B cell (primary cell): ENCODE measurements at regions of chr4 and their contacts with region 1.

Region 1: DNA sequence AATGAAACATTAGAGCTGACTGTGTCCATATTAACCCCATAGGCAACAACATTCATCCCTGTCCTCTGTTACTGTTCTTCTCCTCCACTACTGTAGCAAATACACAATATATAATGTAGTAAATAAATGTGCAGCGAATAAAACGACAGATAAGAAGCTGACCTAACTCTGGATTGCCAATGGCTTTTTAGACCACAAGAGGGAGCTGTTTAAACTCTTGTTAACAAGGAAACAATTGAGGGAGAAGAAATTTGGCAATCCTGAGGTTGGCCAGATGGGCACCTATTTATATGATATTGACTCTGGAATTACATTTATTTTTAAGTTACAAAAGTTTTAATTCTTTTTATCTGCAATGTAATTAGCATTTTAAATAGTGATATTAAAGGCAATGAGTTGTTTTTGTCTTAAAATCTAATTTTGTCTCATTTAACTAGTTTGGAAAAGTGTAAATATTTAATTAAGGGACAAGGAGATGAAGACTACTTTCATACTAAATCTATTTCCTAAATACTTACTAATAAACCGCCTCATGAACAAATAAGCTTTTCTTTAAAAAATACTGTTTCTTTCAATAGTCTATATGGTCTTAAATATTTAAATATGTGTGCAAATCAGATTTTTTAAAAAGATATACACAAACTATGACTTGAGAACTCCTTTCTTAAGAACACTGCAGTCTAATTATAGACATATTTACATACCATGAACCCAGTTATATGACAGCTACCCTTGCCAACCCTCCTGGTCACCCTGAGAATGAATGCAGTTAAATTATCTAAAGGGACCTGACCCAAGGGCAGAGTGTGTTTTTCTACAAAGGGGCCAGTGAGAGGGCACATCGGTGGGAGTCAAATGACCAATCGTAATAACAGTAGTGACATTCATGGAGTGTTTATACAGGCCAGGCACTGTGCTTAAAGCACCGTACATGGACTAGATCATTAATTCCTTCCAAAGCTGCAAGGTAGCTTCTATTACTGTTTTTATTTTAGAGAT is 52.9 kb upstream of the HPF1 start:
- DNase-seq: peak; percentile 67
- ATAC-seq: peak; percentile 36
- H3K4me3 ChIP-seq: no peak overlapping the region
- H3K4me3 Mint-ChIP-seq: no peak overlapping the region
- H3K27ac ChIP-seq: no peak overlapping the region
- H3K27ac Mint-ChIP-seq: no peak overlapping the region
- H3K4me1 ChIP-seq: no peaks in the 10 kb centered on the region
- H3K4me1 Mint-ChIP-seq: no peaks in the 10 kb centered on the region
- H3K27me3 ChIP-seq: no peaks in the 10 kb centered on the region
- H3K27me3 Mint-ChIP-seq: peaks cover 3% of the 10 kb centered on the region
- CTCF ChIP-seq: peak; percentile 89

Region 2: GRCh38 chr4:169823685-169824084 is 13.1 kb after region 1 on chr4:
- CTCF ChIA-PET with region 1: interaction called, 11 read pairs
- POLR2A ChIA-PET with region 1: no interaction called
- intact Hi-C with region 1: no loop called
- DNase-seq: no peak
- ATAC-seq: no peak
- H3K4me3 ChIP-seq: no peak overlapping the region
- H3K4me3 Mint-ChIP-seq: no peak overlapping the region
- H3K27ac ChIP-seq: no peak overlapping the region
- H3K27ac Mint-ChIP-seq: no peak overlapping the region
- H3K4me1 ChIP-seq: peaks cover 3% of the 10 kb centered on the region in 2 donors
- H3K4me1 Mint-ChIP-seq: peaks cover 3% of the 10 kb centered on the region
- H3K27me3 ChIP-seq: peaks cover 0 to 6% (median 0%) of the 10 kb centered on the region in 4 experiments
- H3K27me3 Mint-ChIP-seq: peaks cover 7% of the 10 kb centered on the region
- CTCF ChIP-seq: no peak

Region 3: GRCh38 chr4:169846396-169846795 is 35.8 kb after region 1 on chr4:
- CTCF ChIA-PET with region 1: no interaction called
- POLR2A ChIA-PET with region 1: no interaction called
- intact Hi-C with region 1: no loop called
- DNase-seq: no peak
- ATAC-seq: no peak
- H3K4me3 ChIP-seq: no peak overlapping the region
- H3K4me3 Mint-ChIP-seq: no peak overlapping the region
- H3K27ac ChIP-seq: no peak overlapping the region
- H3K27ac Mint-ChIP-seq: no peak overlapping the region
- H3K4me1 ChIP-seq: no peaks in the 10 kb centered on the region
- H3K4me1 Mint-ChIP-seq: no peaks in the 10 kb centered on the region
- H3K27me3 ChIP-seq: peaks cover 0 to 3% (median 0%) of the 10 kb centered on the region in 4 experiments
- H3K27me3 Mint-ChIP-seq: peaks cover 26% of the 10 kb centered on the region
- CTCF ChIP-seq: no peak

Region 4: GRCh38 chr4:170040031-170040680 is 229.5 kb after region 1 on chr4:
- CTCF ChIA-PET with region 1: interaction called, 20 read pairs
- POLR2A ChIA-PET with region 1: no interaction called
- intact Hi-C with region 1: no loop called
- DNase-seq: no peak
- ATAC-seq: no peak
- H3K4me3 ChIP-seq: no peak overlapping the region
- H3K4me3 Mint-ChIP-seq: no peak overlapping the region
- H3K27ac ChIP-seq: no peak overlapping the region
- H3K27ac Mint-ChIP-seq: no peak overlapping the region
- H3K4me1 ChIP-seq: no peaks in the 10 kb centered on the region
- H3K4me1 Mint-ChIP-seq: no peaks in the 10 kb centered on the region
- H3K27me3 ChIP-seq: no peaks in the 10 kb centered on the region
- H3K27me3 Mint-ChIP-seq: peaks cover 8% of the 10 kb centered on the region
- CTCF ChIP-seq: no peak

Region 5: GRCh38 chr4:170047771-170048354 is 237.2 kb after region 1 on chr4:
- CTCF ChIA-PET with region 1: interaction called, 51 read pairs
- POLR2A ChIA-PET with region 1: no interaction called
- intact Hi-C with region 1: no loop called
- DNase-seq: peak; percentile 69
- ATAC-seq: no peak
- H3K4me3 ChIP-seq: no peak overlapping the region
- H3K4me3 Mint-ChIP-seq: no peak overlapping the region
- H3K27ac ChIP-seq: no peak overlapping the region
- H3K27ac Mint-ChIP-seq: no peak overlapping the region
- H3K4me1 ChIP-seq: no peaks in the 10 kb centered on the region
- H3K4me1 Mint-ChIP-seq: no peaks in the 10 kb centered on the region
- H3K27me3 ChIP-seq: peaks cover 0 to 3% (median 1%) of the 10 kb centered on the region in 4 experiments
- H3K27me3 Mint-ChIP-seq: peaks cover 3% of the 10 kb centered on the region
- CTCF ChIP-seq: peak; percentile 88

Region 6: GRCh38 chr4:170227928-170228327 is 417.3 kb after region 1 on chr4:
- CTCF ChIA-PET with region 1: no interaction called
- POLR2A ChIA-PET with region 1: no interaction called
- intact Hi-C with region 1: no loop called
- DNase-seq: no peak
- ATAC-seq: no peak
- H3K4me3 ChIP-seq: no peak overlapping the region
- H3K4me3 Mint-ChIP-seq: no peak overlapping the region
- H3K27ac ChIP-seq: no peak overlapping the region
- H3K27ac Mint-ChIP-seq: no peak overlapping the region
- H3K4me1 ChIP-seq: peaks cover 0 to 2% of the 10 kb centered on the region in 2 donors
- H3K4me1 Mint-ChIP-seq: peaks cover 4% of the 10 kb centered on the region
- H3K27me3 ChIP-seq: no peaks in the 10 kb centered on the region
- H3K27me3 Mint-ChIP-seq: no peaks in the 10 kb centered on the region
- CTCF ChIP-seq: no peak